ENCODE measurements at regions of chr1 and their contacts with region 1.

Region 1: DNA sequence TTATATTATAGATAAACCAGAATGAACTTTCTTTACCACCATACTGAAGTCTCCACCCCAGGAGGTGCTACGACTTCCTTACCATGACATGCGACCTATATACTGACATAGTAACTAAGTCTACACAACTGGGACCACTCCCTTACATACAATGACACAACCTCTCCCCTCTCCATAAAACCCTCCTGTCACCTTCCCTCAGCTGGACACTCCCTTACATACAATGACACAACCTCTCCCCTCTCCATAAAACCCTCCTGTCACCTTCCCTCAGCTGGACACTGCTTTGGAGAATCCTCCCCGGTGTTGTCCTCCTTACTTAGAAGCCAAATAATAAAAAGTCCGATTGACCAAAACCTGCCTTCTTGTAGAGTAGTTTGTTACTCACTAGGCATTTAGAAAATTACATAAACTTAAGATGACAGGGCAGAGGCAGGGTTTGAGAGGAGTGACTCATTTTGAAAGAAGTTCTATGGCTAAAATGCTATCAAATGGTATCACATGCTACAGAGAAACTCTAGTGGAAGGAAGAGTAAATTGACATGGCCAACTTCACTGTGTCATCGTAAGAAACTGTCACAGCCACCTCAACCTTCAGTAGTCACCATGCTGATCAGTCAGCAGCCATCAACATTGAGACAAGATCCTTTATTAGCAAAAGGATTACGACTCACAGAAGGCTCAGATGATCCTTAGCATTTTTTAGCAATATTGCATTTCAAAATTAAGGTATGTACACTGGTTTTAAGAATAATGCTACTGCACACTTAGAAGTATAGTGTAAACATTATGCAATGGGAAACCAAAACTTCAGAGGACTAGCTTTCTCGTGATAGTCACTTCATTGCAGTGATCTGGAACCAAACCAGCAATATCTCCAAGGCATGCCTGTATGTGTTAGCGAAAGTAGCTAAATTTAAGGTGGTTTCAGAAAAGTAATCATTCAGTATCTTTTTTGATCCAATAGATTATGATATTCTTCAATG is 56.4 kb downstream of the AHCTF1 start:
- DNase-seq: no peak
- H3K4me3 ChIP-seq: no peak overlapping the region
- H3K27ac ChIP-seq: no peak overlapping the region
- H3K4me1 ChIP-seq: no peaks in the 10 kb centered on the region
- H3K27me3 ChIP-seq: no peaks in the 10 kb centered on the region
- CTCF ChIP-seq: no peak

Region 2: GRCh38 chr1:246815693-246816270 is 59.6 kb before region 1 on chr1:
- CTCF ChIA-PET with region 1: no interaction called
- POLR2A ChIA-PET with region 1: interaction called, 10 read pairs
- intact Hi-C with region 1: no loop called
- DNase-seq: no peak
- H3K4me3 ChIP-seq: no peak overlapping the region
- H3K27ac ChIP-seq: no peak overlapping the region
- H3K4me1 ChIP-seq: no peaks in the 10 kb centered on the region
- H3K27me3 ChIP-seq: 0 out of 2 replicates have a peak, but pooled peaks cover 3% of the 10 kb centered on the region
- CTCF ChIP-seq: no peak

Region 3: GRCh38 chr1:246923482-246923881 is 48.1 kb after region 1 on chr1:
- CTCF ChIA-PET with region 1: no interaction called
- POLR2A ChIA-PET with region 1: no interaction called
- intact Hi-C with region 1: no loop called
- DNase-seq: no peak
- H3K4me3 ChIP-seq: no peak overlapping the region
- H3K27ac ChIP-seq: no peak overlapping the region
- H3K4me1 ChIP-seq: no peaks in the 10 kb centered on the region
- H3K27me3 ChIP-seq: no peaks in the 10 kb centered on the region
- CTCF ChIP-seq: no peak

Measured in PC-9 (cell line).